ENCODE measurements at regions of chr1 and their contacts with region 1.

Region 1: DNA sequence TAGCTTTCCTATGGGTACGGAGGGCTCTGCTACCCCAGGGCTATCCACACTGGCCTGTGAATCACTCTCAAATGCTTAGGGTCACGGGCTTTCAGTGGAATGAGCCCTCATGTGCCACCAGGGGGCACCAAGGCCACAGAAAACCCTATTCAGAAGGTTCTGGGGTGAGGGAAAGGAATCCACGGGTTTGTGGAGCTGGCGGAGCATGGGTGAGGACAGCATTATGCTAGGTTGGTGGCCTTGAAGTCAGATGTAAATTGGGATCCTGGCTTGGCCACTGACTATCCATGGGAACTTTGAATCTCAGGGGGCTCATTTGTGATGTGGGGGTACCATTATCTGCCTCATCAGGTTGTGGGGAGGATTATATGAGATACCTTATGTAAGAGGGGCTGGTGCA is 5.1 kb upstream of the LAMTOR5 start:
- DNase-seq: peak; percentile 78
- H3K4me3 ChIP-seq: no peak overlapping the region; a peak in 1 of 4 replicates
- H3K27ac ChIP-seq: no peak overlapping the region
- H3K4me1 ChIP-seq: peaks cover 3 to 7% of the 10 kb centered on the region in 2 experiments; a peak in 1 of 4 replicates
- H3K27me3 ChIP-seq: no peaks in the 10 kb centered on the region
- CTCF ChIP-seq: peak; percentile 79
- EP300 ChIP-seq: no peak
- RAD21 ChIP-seq: peak; percentile 82

Region 2: DNA sequence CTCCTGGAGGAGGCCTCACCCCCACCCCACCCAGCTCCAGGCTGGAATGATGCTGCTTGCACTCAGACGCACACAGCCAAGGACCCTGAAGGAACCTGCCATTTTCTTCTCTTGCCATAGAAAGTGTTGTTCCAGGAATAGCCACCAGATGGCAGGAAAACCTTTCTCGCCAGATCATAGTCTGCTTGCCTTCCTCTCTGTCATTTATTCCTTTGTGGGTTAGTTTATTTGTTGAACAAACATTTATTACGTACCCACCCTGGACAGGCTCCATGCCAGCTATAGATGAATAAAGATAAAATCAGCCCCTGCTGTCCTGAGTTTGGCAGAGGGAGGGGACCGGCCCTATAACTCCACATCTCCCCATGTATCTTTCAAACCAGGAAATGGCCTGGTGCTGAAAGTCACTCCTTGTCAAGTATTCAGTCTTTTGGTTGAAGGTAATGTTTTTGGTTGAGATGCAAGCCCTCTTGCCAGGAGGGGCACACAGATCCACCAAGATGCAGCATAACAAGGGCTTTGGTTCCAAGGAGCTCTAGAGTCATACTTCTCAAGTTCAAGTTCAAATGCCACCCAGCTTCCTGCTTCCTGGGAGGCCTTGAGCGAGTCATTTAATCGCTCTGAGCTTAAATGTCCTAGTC is 209.4 kb before region 1 on chr1:
- CTCF ChIA-PET with region 1: interaction called, 48 read pairs
- POLR2A ChIA-PET with region 1: no interaction called
- DNase-seq: peak; percentile 72
- H3K4me3 ChIP-seq: no peak overlapping the region; a peak in 1 of 4 replicates
- H3K27ac ChIP-seq: no peak overlapping the region
- H3K4me1 ChIP-seq: peaks cover 0 to 25% of the 10 kb centered on the region in 2 experiments; a peak in 1 of 4 replicates
- H3K27me3 ChIP-seq: no peaks in the 10 kb centered on the region
- CTCF ChIP-seq: peak; percentile 84
- EP300 ChIP-seq: no peak
- RAD21 ChIP-seq: peak; percentile 89

Region 3: DNA sequence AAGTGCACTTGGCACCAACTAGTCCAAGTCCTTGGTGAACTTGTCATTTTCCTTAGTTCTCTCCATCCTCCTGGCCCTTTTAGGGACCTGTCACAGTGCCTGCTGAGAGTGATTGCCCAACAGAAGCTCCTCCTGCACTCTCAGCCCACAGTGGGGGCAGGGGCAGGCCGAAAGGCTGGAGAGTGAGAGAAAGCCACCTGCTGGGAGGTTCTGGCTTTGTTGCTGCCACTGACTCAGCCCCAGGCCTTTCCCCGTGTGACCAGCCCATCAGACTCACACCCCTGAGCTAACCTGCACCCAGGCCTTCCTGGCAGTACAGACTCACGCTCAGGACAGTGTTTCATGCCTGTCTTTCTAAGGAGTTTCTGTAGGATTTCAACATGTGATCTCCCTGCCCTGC is 21.2 kb after region 1 on chr1:
- CTCF ChIA-PET with region 1: interaction called, 41 read pairs
- POLR2A ChIA-PET with region 1: no interaction called
- DNase-seq: no peak
- H3K4me3 ChIP-seq: no peak overlapping the region
- H3K27ac ChIP-seq: no peak overlapping the region
- H3K4me1 ChIP-seq: no peaks in the 10 kb centered on the region; a peak in 1 of 4 replicates
- H3K27me3 ChIP-seq: peaks cover 35% of the 10 kb centered on the region
- CTCF ChIP-seq: no peak
- EP300 ChIP-seq: no peak
- RAD21 ChIP-seq: no peak

Region 4: GRCh38 chr1:110455151-110455550 is 42.6 kb after region 1 on chr1:
- CTCF ChIA-PET with region 1: interaction called, 250 read pairs
- POLR2A ChIA-PET with region 1: interaction called, 3 read pairs
- DNase-seq: no peak
- H3K4me3 ChIP-seq: no peak overlapping the region
- H3K27ac ChIP-seq: no peak overlapping the region
- H3K4me1 ChIP-seq: no peaks in the 10 kb centered on the region
- H3K27me3 ChIP-seq: peaks cover 33% of the 10 kb centered on the region
- CTCF ChIP-seq: no peak
- EP300 ChIP-seq: no peak
- RAD21 ChIP-seq: no peak

Region 5: DNA sequence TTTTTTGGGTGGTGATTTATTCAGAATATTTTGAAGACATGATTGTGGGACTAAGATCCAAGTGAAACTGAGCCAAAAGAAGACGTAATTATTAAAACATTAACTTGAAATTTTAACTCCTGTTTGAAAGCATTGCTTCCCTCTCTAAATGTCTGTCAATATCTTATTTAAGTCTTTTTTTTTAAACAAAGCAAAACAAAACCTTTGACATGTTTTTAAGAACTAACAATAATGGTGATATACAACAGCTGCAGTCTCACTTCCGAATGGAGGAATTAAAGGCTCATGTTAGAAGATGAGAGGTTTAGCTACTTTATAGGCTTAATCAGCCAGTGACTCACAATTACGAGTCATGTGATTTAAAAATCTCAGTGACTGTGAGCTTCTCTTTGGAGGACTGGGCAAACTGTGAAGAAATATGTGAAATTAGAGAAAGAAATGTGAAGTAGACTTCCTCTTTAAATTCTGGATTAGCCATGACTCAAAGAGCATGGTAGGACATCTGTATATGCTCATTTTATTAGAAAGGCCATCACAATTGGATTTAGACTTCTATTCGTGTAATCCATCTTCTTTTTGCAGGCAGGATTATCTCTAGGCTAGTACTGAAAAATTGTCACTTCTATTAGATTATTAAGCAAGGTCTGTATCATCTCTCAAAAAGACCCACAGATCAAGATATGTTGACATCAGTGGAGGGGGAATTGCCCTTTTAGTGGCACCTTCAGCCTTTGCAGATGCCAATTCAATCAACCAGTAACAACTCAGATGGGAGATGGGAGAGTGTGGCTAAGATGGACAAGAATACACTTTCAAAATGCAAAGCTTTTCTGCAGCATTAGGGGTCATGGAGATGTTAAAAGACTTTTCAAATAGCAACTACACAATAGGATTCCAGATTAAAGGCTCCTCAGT is 233.5 kb after region 1 on chr1:
- CTCF ChIA-PET with region 1: no interaction called
- POLR2A ChIA-PET with region 1: no interaction called
- DNase-seq: no peak
- H3K4me3 ChIP-seq: no peak overlapping the region
- H3K27ac ChIP-seq: no peak overlapping the region
- H3K4me1 ChIP-seq: peaks cover 0 to 23% of the 10 kb centered on the region in 2 experiments; a peak in 1 of 4 replicates
- H3K27me3 ChIP-seq: no peaks in the 10 kb centered on the region
- CTCF ChIP-seq: no peak
- EP300 ChIP-seq: no peak
- RAD21 ChIP-seq: no peak

Measured in SK-N-SH (cell line).